IMR-90 (cell line): ENCODE measurements at regions of chr20 and their contacts with region 1.

Region 1: DNA sequence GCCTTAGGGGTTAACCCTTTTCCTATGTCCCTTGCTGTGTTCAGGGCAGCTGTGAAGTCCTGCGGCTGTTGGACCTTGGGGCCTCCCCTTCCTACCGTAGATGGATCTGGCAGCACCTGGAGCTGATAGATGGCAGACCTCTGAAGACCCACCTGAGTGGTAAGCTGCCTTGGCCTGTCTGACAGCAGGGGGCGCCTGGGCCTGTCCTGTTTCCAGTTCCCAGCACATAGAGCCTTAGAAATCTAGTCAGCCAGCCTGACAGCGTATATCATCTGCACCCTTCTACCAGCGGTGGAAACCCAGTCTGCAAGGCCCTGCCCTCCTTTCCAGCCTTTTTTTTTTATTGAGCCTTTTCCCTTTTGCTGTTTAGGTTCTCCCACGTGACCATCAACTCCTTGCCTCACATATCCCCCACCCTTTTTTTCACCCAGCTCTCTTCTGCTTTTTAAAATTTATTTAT is 26.6 kb downstream of the CNBD2 start:
- DNase-seq: peak; percentile 76
- ATAC-seq: peak; percentile 94
- H3K4me3 ChIP-seq: no peak overlapping the region
- H3K27ac ChIP-seq: no peak overlapping the region
- H3K4me1 ChIP-seq: no peaks in the 10 kb centered on the region
- H3K27me3 ChIP-seq: peaks cover 3% of the 10 kb centered on the region; the same call in 1 of the 2 replicates
- CTCF ChIP-seq: peak; percentile 84
- POLR2A ChIP-seq: no peak
- RAD21 ChIP-seq: peak; percentile 92

Region 2: GRCh38 chr20:35978041-35978513 is 16.9 kb before region 1 on chr20:
- CTCF ChIA-PET with region 1: interaction called, 13 read pairs
- POLR2A ChIA-PET with region 1: no interaction called
- dilution Hi-C with region 1: no loop called
- in situ Hi-C with region 1: no loop called
- intact Hi-C with region 1: no loop called
- DNase-seq: peak; percentile 22
- ATAC-seq: peak; percentile 46
- H3K4me3 ChIP-seq: no peak overlapping the region
- H3K27ac ChIP-seq: no peak overlapping the region
- H3K4me1 ChIP-seq: no peaks in the 10 kb centered on the region
- H3K27me3 ChIP-seq: peaks cover 25% of the 10 kb centered on the region
- CTCF ChIP-seq: no peak
- POLR2A ChIP-seq: no peak
- RAD21 ChIP-seq: no peak

Region 3: GRCh38 chr20:36050436-36051317 is 55.7 kb after region 1 on chr20:
- CTCF ChIA-PET with region 1: interaction called, 3 read pairs
- POLR2A ChIA-PET with region 1: no interaction called
- dilution Hi-C with region 1: no loop called
- in situ Hi-C with region 1: no loop called
- intact Hi-C with region 1: loop called (anchors 5 kb)
- DNase-seq: peak; percentile 82
- ATAC-seq: peak; percentile 95
- H3K4me3 ChIP-seq: peak overlapping the region; percentile 88
- H3K27ac ChIP-seq: peak overlapping the region; percentile 95
- H3K4me1 ChIP-seq: no peaks in the 10 kb centered on the region
- H3K27me3 ChIP-seq: no peaks in the 10 kb centered on the region; the same call in 1 of the 2 replicates
- CTCF ChIP-seq: no peak
- POLR2A ChIP-seq: peak; percentile 98
- RAD21 ChIP-seq: no peak

Region 4: GRCh38 chr20:36145877-36146707 is 151.1 kb after region 1 on chr20:
- CTCF ChIA-PET with region 1: interaction called, 90 read pairs
- POLR2A ChIA-PET with region 1: no interaction called
- dilution Hi-C with region 1: no loop called
- in situ Hi-C with region 1: no loop called
- intact Hi-C with region 1: no loop called
- DNase-seq: peak; percentile 44
- ATAC-seq: peak; percentile 52
- H3K4me3 ChIP-seq: no peak overlapping the region
- H3K27ac ChIP-seq: no peak overlapping the region
- H3K4me1 ChIP-seq: peaks cover 6% of the 10 kb centered on the region; the same call in 1 of the 2 replicates
- H3K27me3 ChIP-seq: peaks cover 7% of the 10 kb centered on the region
- CTCF ChIP-seq: no peak
- POLR2A ChIP-seq: no peak
- RAD21 ChIP-seq: no peak

Region 5: GRCh38 chr20:36439040-36439730 is 444.2 kb after region 1 on chr20:
- CTCF ChIA-PET with region 1: no interaction called
- POLR2A ChIA-PET with region 1: no interaction called
- dilution Hi-C with region 1: no loop called
- in situ Hi-C with region 1: loop called (anchors 25 kb)
- intact Hi-C with region 1: loop called (anchors 5 kb)
- DNase-seq: peak; percentile 43
- ATAC-seq: peak; percentile 91
- H3K4me3 ChIP-seq: no peak overlapping the region
- H3K27ac ChIP-seq: no peak overlapping the region
- H3K4me1 ChIP-seq: no peaks in the 10 kb centered on the region
- H3K27me3 ChIP-seq: peaks cover 40% of the 10 kb centered on the region
- CTCF ChIP-seq: peak; percentile 85
- POLR2A ChIP-seq: no peak
- RAD21 ChIP-seq: peak; percentile 89